Activated CD4-positive, alpha-beta memory T cell treated with anti-CD3 and anti-CD28 coated beads for 36 hours (primary cell): ENCODE measurements at regions of chr11 and their contacts with region 1.

Region 1: GRCh38 chr11:118435893-118436624 is at the start of gene KMT2A:
- DNase-seq: peak; percentile 95
- H3K4me3 Mint-ChIP-seq: peak within 1 kb of the TSS; percentile 91
- H3K27ac Mint-ChIP-seq: peak within 1 kb of the TSS; percentile 97
- H3K4me1 Mint-ChIP-seq: peaks cover 37% of the 10 kb centered on the region
- H3K27me3 Mint-ChIP-seq: no peaks in the 10 kb centered on the region
- total RNA-seq, gene KMT2A: 61.5 to 72.4 TPM

Region 2: GRCh38 chr11:117985953-117986887 is 449.8 kb before region 1 on chr11 and contains the start of gene IL10RA:
- CTCF ChIA-PET with region 1: no interaction called
- POLR2A ChIA-PET with region 1: interaction called, 3 read pairs
- intact Hi-C with region 1: loop called (anchors 5 kb)
- DNase-seq: peak; percentile 91
- H3K4me3 Mint-ChIP-seq: peak within 1 kb of the TSS; percentile 82
- H3K27ac Mint-ChIP-seq: peak within 1 kb of the TSS; percentile 97
- H3K4me1 Mint-ChIP-seq: peaks cover 69% of the 10 kb centered on the region
- H3K27me3 Mint-ChIP-seq: no peaks in the 10 kb centered on the region
- total RNA-seq, gene IL10RA: 114 to 117 TPM

Region 3: DNA sequence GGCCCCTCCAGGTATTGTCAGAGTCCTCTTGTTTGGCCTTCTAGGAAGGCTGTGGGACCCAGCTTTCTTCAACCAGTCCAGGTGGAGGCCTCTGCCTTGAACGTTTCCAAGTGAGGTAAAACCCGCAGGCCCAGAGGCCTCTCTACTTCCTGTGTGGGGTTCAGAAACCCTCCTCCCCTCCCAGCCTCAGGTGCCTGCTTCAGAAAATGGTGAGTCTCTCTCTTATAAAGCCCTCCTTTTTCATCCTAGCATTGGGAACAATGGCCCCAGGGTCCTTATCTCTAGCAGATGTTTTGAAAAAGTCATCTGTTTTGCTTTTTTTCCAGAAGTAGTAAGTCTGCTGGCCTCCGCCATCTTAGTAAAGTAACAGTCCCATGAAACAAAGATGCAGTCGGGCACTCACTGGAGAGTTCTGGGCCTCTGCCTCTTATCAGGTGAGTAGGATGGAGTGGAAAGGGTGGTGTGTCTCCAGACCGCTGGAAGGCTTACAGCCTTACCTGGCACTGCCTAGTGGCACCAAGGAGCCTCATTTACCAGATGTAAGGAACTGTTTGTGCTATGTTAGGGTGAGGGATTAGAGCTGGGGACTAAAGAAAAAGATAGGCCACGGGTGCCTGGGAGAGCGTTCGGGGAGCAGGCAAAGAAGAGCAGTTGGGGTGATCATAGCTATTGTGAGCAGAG is 131.4 kb before region 1 on chr11 and contains the start of gene CD3E:
- CTCF ChIA-PET with region 1: no interaction called
- POLR2A ChIA-PET with region 1: interaction called, 3 read pairs
- intact Hi-C with region 1: loop called (anchors 2 kb)
- DNase-seq: peak; percentile 84
- H3K4me3 Mint-ChIP-seq: peak within 1 kb of the TSS; percentile 100
- H3K27ac Mint-ChIP-seq: peak within 1 kb of the TSS; percentile 100
- H3K4me1 Mint-ChIP-seq: peaks cover 66% of the 10 kb centered on the region
- H3K27me3 Mint-ChIP-seq: no peaks in the 10 kb centered on the region
- total RNA-seq, gene CD3E: 476 to 488 TPM

Region 4: DNA sequence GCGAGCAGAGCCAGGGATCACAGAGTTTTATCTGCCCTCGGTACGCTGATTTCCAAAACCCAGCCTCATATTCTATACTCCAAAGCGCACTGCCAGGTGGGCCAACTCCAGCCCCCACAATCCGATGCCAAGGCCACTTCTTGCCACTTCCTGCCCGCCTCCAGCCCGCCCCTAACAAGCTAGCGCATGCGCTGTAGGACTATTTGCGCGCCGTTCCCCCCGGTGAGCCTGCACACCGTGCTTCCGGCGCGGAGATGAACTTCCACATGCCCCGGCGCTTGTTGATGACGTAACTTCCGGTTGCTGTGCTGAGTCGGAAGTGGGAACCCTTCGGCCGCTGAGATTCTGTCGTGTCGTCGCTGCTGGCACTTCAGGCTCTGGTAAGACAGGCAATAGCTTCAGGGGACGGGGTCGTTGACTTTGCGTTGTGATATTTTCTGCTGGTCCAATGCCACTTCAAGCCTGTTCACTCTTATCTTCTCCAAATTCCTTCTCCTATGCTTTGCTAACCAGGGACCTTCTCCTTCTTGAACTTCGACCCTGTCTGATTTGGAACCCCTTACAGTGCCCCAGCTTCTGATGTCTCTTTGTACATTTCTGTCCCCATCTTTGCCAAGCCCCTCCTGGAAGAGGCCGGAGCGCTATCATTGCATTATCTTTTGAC is 76.6 kb before region 1 on chr11 and contains the start of gene UBE4A:
- CTCF ChIA-PET with region 1: interaction called, 3 read pairs
- POLR2A ChIA-PET with region 1: no interaction called
- intact Hi-C with region 1: loop called (anchors 1 kb)
- DNase-seq: peak; percentile 99
- H3K4me3 Mint-ChIP-seq: peak within 1 kb of the TSS; percentile 96
- H3K27ac Mint-ChIP-seq: peak within 1 kb of the TSS; percentile 93
- H3K4me1 Mint-ChIP-seq: peaks cover 45% of the 10 kb centered on the region
- H3K27me3 Mint-ChIP-seq: peaks cover 2% of the 10 kb centered on the region
- total RNA-seq, gene UBE4A: 39.1 to 40.4 TPM

Region 5: DNA sequence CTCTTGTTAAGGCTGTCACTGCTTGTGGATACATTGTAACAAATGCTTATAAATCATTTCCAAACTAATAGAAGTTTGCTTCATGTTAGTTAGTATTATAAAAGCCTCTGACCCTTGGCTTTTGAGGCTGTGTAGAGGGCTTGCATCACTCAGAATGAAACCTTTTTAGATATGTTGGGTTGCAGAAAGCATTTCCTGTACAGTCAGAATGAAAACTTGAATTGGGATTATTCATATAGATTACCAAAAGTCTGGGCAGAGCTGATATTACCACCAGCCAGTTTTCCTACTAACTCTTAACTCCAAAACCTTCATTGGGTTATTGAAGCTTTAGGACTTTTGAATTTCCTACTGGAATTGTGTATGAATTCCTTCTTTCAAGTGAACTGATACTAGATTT is 12.2 kb after region 1 on chr11:
- CTCF ChIA-PET with region 1: interaction called, 5 read pairs
- POLR2A ChIA-PET with region 1: interaction called, 20 read pairs
- intact Hi-C with region 1: loop called (anchors 1 kb)
- DNase-seq: no peak
- H3K4me3 Mint-ChIP-seq: no peak overlapping the region
- H3K27ac Mint-ChIP-seq: no peak overlapping the region
- H3K4me1 Mint-ChIP-seq: peaks cover 72% of the 10 kb centered on the region
- H3K27me3 Mint-ChIP-seq: no peaks in the 10 kb centered on the region

Region 6: DNA sequence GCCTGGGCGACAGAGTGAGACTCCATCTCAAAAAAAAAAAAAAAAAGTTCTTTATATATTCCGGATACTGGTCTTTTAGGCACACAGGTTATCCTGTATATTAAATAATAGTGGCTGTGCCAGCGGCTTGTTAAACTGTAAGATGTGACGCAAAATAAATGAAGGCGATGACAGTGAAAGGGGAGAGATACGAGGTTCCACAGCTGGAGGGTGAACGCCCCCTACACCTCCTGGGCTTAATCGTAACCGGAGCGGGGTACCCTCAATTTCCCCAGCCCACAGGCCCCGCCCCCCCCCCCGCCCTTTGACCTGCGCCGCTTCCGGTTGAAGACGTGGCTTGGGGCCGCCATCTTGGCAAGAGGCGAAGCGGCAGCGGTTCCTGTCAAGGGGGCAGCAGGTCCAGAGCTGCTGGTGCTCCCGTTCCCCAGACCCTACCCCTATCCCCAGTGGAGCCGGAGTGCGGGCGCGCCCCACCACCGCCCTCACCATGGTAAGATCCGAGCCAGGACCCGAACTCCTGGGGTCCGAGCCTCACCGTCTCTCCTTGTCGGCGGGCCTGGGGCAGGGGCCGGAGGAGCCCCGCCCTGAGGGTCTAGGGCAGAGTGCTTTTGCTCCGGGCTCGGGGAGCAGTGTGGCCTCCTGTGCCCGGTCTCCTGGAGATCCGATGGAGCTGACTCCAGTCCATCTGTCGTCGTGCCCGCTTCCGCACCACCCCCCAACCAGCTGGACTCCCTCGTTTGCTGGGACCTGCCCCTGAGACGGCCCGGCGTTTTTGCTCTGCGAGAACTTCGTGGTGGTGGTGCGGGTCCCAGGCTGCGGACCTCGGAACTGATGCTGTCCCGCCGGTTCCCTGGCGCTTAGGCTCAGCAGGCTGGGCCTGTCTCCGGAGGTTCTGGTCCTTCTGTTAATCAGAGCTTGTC is 136.3 kb after region 1 on chr11 and contains the start of gene ARCN1:
- CTCF ChIA-PET with region 1: no interaction called
- POLR2A ChIA-PET with region 1: interaction called, 4 read pairs
- intact Hi-C with region 1: loop called (anchors 2 kb)
- DNase-seq: peak; percentile 87
- H3K4me3 Mint-ChIP-seq: peak within 1 kb of the TSS; percentile 87
- H3K27ac Mint-ChIP-seq: peak within 1 kb of the TSS; percentile 92
- H3K4me1 Mint-ChIP-seq: peaks cover 52% of the 10 kb centered on the region
- H3K27me3 Mint-ChIP-seq: no peaks in the 10 kb centered on the region
- total RNA-seq, gene ARCN1: 180 to 182 TPM